Tibial artery (tissue), 4 donors: ENCODE measurements at regions of chr1 and their contacts with region 1.

Region 1: GRCh38 chr1:235079443-235080296 is 49.0 kb downstream of the TOMM20 start:
- DNase-seq: no peak
- H3K4me3 ChIP-seq: no peak overlapping the region
- H3K27ac ChIP-seq: peak overlapping the region; percentile 14 to 47
- H3K4me1 ChIP-seq: peaks cover 0 to 71% (median 58%) of the 10 kb centered on the region in 4 donors
- H3K27me3 ChIP-seq: no peaks in the 10 kb centered on the region
- CTCF ChIP-seq: no peak

Region 2: DNA sequence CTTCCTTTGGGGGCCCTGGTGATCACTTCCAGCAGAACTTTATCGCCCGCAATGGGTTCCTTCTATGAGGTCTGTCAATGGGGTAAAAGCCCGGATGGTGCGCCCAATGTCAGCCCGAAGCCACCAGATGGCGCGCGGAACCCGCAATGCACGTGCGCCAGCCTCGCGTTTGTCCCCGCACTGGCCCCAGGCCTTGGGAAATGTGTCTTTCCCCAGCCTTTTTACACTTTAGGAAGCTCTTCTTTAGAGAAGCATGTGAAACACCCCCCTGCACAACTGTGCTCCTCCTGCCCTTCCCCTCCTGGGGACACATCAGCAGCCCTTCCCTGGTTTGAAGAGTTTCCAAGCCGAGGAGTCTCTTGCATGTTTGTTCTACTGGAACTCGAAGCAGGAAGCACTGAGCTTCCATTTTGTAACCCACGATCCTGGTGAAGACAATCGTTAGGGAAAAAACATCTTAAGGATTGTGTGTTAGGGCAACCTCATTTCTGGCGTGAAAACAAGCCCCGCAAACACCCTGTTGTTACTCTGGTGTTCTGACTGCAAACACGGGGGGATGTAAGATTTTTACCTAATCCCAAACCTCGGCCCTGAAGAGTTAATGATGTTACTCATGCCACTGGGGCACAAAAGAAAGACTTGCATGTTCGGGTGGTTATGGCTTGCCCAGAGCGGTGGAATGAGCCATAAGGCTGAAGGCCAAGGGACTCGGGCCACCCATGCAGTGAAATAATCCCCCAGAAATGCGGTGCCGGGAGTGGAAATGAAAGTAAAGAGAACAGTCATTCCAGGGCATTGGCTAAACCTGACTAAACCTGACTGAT is 580.3 kb before region 1 on chr1:
- intact Hi-C with region 1: loop called (anchors 2 kb)
- DNase-seq: peak; percentile 92 to 96
- H3K4me3 ChIP-seq: peak overlapping the region; percentile 30 to 37
- H3K27ac ChIP-seq: peak overlapping the region; percentile 84
- H3K4me1 ChIP-seq: peaks cover 0 to 51% (median 30%) of the 10 kb centered on the region in 4 donors
- H3K27me3 ChIP-seq: no peaks in the 10 kb centered on the region
- CTCF ChIP-seq: peak; percentile 97 to 98

Region 3: GRCh38 chr1:234987415-234988154 is 92.1 kb before region 1 on chr1:
- intact Hi-C with region 1: loop called (anchors 5 kb)
- DNase-seq: peak; percentile 85 to 93
- H3K4me3 ChIP-seq: no peak overlapping the region
- H3K27ac ChIP-seq: peak overlapping the region; percentile 87
- H3K4me1 ChIP-seq: peaks cover 3 to 77% (median 50%) of the 10 kb centered on the region in 4 donors
- H3K27me3 ChIP-seq: no peaks in the 10 kb centered on the region
- CTCF ChIP-seq: peak in 1 of 2 experiments; percentile 9

Region 4: GRCh38 chr1:235136111-235136510 is 56.4 kb after region 1 on chr1:
- intact Hi-C with region 1: no loop called
- DNase-seq: no peak
- H3K4me3 ChIP-seq: no peak overlapping the region
- H3K27ac ChIP-seq: no peak overlapping the region
- H3K4me1 ChIP-seq: no peaks in the 10 kb centered on the region
- H3K27me3 ChIP-seq: no peaks in the 10 kb centered on the region
- CTCF ChIP-seq: no peak